Mammary epithelial cell (primary cell): ENCODE measurements at regions of chr10 and their contacts with region 1.

Region 1: GRCh38 chr10:35074266-35074665 is 15.9 kb downstream of the CUL2 start:
- DNase-seq: no peak
- H3K4me3 ChIP-seq: no peak overlapping the region
- H3K27ac ChIP-seq: no peak overlapping the region
- H3K4me1 ChIP-seq: peaks cover 4% of the 10 kb centered on the region
- H3K27me3 ChIP-seq: no peaks in the 10 kb centered on the region
- CTCF ChIP-seq: no peak

Region 2: GRCh38 chr10:34655286-34656170 is 418.7 kb before region 1 on chr10:
- CTCF ChIA-PET with region 1: no interaction called
- dilution Hi-C with region 1: no loop called
- in situ Hi-C with region 1: no loop called
- intact Hi-C with region 1: no loop called
- DNase-seq: peak; percentile 42
- H3K4me3 ChIP-seq: no peak overlapping the region
- H3K27ac ChIP-seq: no peak overlapping the region
- H3K4me1 ChIP-seq: peaks cover 9% of the 10 kb centered on the region
- H3K27me3 ChIP-seq: no peaks in the 10 kb centered on the region
- CTCF ChIP-seq: peak; percentile 62 to 76

Region 3: GRCh38 chr10:35015843-35016408 is 58.3 kb before region 1 on chr10:
- CTCF ChIA-PET with region 1: no interaction called
- dilution Hi-C with region 1: no loop called
- in situ Hi-C with region 1: no loop called
- intact Hi-C with region 1: no loop called
- DNase-seq: peak; percentile 43
- H3K4me3 ChIP-seq: no peak overlapping the region
- H3K27ac ChIP-seq: peak overlapping the region; percentile 52
- H3K4me1 ChIP-seq: peaks cover 14% of the 10 kb centered on the region
- H3K27me3 ChIP-seq: no peaks in the 10 kb centered on the region
- CTCF ChIP-seq: no peak

Region 4: GRCh38 chr10:35027567-35027966 is 46.7 kb before region 1 on chr10:
- CTCF ChIA-PET with region 1: no interaction called
- dilution Hi-C with region 1: loop called (anchors 5 kb)
- in situ Hi-C with region 1: no loop called
- intact Hi-C with region 1: no loop called
- DNase-seq: no peak
- H3K4me3 ChIP-seq: no peak overlapping the region
- H3K27ac ChIP-seq: no peak overlapping the region
- H3K4me1 ChIP-seq: peaks cover 10% of the 10 kb centered on the region
- H3K27me3 ChIP-seq: no peaks in the 10 kb centered on the region
- CTCF ChIP-seq: peak; percentile 32 to 41

Region 5: GRCh38 chr10:35112571-35112970 is 38.3 kb after region 1 on chr10:
- CTCF ChIA-PET with region 1: interaction called, 11 read pairs
- dilution Hi-C with region 1: no loop called
- in situ Hi-C with region 1: no loop called
- intact Hi-C with region 1: no loop called
- DNase-seq: no peak
- H3K4me3 ChIP-seq: no peak overlapping the region
- H3K27ac ChIP-seq: no peak overlapping the region
- H3K4me1 ChIP-seq: no peaks in the 10 kb centered on the region
- H3K27me3 ChIP-seq: no peaks in the 10 kb centered on the region
- CTCF ChIP-seq: no peak

Region 6: DNA sequence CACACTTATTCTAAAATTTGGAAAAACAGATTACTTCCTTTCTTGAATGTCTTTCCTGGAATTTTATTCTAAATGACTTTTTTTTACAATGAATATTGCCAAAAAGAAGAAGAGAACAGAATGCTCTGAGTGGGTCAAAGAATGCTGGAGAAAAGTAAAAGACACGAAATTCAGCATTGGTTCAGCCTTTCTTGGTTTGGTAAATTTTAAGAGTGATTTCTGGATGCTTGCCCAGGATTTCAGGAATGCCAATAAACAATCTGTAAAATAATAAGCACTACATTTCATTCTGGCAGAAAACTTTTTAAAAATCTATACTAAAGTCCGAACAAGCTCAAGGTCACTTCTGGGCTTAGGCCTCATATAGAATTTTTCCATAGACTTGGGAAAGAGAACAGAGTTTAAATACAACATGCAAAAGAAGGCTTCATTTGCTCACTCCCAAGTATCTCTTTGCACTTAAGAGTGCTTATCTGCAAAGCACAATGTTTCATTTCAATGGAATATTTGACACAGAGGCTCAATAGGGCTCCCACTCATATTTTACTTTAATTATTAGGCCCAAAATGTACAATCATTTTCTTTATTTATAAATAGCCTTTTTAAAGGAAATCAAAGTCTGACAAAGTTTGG is 1691.6 kb after region 1 on chr10:
- CTCF ChIA-PET with region 1: no interaction called
- dilution Hi-C with region 1: no loop called
- in situ Hi-C with region 1: no loop called
- intact Hi-C with region 1: no loop called
- DNase-seq: no peak
- H3K4me3 ChIP-seq: no peak overlapping the region
- H3K27ac ChIP-seq: no peak overlapping the region
- H3K4me1 ChIP-seq: no peaks in the 10 kb centered on the region
- H3K27me3 ChIP-seq: no peaks in the 10 kb centered on the region
- CTCF ChIP-seq: no peak